ENCODE measurements at regions of chr5 and their contacts with region 1.

Region 1: DNA sequence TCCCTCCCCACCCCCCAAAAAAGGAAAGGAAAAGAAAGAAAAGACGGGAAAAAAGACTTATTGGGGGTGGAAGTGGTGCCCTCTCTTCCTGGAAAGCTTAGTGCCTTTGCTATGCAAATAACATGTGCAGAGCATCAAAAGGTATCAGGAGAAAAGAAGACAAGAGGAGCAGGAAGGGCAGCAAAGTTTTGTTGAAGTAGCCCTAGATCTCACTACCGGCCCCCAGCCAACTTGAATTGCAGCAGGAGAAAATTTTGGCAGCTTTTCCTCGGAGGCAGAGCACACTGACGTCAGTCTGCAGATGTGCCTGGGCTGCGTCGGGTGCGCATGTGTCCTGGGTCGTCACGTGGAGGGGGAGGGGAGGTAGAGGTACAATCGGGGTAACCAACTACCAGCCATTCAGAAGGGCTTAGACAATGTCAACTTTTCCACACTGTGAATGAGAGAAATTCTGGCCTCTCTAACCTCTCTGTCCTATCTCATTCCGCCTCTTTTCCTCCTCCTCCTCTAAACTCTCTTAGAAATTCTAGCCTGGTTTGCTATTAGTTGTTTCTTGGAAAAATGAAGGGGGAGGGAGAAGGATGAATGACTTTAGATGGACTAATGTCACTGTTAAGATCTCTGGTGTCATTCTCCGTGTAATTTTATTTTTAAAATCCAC is at the start of gene ADAMTS6:
- DNase-seq: peak; percentile 61
- ATAC-seq: peak; percentile 87
- H3K4me3 Mint-ChIP-seq: no peak within 1 kb of the TSS
- H3K27ac Mint-ChIP-seq: peak within 1 kb of the TSS; percentile 83
- H3K4me1 Mint-ChIP-seq: peaks cover 9% of the 10 kb centered on the region
- H3K27me3 Mint-ChIP-seq: no peaks in the 10 kb centered on the region
- CTCF ChIP-seq: no peak
- total RNA-seq, gene ADAMTS6: 3.2 and 4.1 TPM in 2 replicates

Region 2: DNA sequence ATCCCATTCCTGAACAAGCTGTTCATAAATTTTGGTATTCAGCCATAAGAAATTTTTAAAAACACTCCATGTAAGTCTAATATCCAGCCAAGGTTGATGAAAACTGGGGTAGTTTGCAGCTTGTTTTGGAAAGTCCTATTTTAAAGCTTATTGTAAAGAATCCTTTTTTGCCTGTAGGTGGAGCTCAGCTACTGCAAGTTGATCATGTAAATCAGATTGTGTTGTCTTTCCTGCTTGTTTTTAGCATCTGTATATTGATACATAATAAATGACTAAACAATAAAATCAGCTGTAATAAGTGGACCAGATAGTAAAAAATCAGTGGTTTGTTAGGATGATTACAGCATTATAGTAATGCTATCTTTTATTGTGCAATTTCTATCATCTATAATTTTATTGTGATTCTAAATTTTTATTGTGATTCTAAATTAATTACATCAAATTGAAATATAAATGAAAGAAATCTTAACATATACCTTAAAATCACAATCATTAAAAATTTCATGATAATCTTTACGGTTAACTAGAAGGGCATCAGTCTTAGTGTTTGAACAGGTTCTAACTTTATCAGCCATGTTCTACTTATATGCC is 670.6 kb before region 1 on chr5:
- CTCF ChIA-PET with region 1: interaction called, 90 read pairs
- POLR2A ChIA-PET with region 1: interaction called, 7 read pairs
- intact Hi-C with region 1: loop called (anchors 1 kb)
- DNase-seq: no peak
- ATAC-seq: no peak
- H3K4me3 Mint-ChIP-seq: no peak overlapping the region
- H3K27ac Mint-ChIP-seq: no peak overlapping the region
- H3K4me1 Mint-ChIP-seq: no peaks in the 10 kb centered on the region
- H3K27me3 Mint-ChIP-seq: no peaks in the 10 kb centered on the region
- CTCF ChIP-seq: no peak

Region 3: DNA sequence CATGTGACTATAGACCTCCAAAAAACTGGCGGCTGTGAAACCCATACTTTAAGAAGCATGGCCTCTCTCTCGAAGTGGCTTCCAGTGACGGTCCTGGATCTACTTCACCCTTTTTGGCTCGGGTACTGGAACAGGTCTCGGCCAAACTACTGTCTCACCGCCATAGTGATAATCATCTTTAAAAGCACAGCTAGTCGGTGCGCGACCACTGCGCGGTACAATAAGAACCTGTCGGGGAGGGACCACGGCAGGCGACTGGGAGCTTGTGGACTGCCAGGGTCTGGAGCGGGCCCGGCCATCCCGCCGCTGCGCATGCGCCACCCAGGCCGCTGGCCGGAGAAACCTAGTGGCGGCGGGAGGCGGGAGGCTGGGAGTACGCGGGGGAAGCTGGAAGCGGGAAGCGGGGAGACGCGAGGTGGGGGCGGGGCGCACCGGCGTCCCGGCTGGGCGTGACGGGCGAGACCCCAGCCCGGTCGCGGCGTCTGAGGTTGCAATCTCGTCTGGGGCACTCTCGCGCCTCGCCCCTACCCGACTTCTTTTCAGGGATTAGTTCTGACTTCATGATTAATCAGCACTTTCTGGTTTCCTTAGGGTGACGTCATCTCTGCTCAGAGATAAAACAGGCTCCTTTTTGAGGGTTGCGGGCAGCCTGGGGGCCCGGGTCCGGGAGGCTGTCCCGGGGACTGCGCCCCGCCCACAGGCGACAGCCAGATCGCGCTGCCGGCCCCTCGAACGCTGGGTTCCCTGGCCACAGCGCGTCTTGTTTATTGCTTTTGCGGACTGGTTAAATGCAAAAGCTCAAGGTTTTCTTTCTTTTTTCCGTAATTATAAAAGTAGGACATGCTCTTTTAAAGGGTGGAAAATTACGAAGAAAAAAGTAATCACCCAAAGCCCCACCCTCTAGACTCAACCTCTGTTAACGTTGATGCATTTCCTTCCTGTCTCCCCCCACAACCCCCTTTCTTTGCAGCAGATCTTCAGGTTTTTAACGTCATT is 446.3 kb before region 1 on chr5:
- CTCF ChIA-PET with region 1: interaction called, 13 read pairs
- POLR2A ChIA-PET with region 1: interaction called, 6 read pairs
- intact Hi-C with region 1: loop called (anchors 1 kb)
- DNase-seq: peak; percentile 70
- ATAC-seq: peak; percentile 80
- H3K4me3 Mint-ChIP-seq: peak overlapping the region; percentile 83
- H3K27ac Mint-ChIP-seq: peak overlapping the region; percentile 77
- H3K4me1 Mint-ChIP-seq: peaks cover 32% of the 10 kb centered on the region
- H3K27me3 Mint-ChIP-seq: no peaks in the 10 kb centered on the region
- CTCF ChIP-seq: no peak

Region 4: DNA sequence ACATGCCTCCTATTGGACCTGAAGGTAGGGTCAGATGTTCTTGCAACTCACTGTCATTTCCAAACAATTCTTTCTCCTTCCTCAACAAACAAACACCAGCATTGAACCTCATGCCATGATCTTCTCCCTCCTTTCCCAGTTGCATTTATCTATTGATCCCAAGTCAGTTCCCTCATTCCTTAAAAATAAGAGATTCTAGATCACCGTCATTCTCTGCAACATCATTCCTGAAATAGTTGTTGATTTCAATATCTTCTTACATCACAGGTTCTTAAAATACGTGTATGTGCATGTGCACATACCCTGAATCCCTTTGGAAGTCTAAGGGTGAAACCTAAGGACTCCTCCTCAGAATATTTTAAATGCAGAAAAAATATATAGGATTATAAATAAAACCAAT is 17.9 kb before region 1 on chr5:
- CTCF ChIA-PET with region 1: no interaction called
- POLR2A ChIA-PET with region 1: interaction called, 5 read pairs
- intact Hi-C with region 1: loop called (anchors 2 kb)
- DNase-seq: no peak
- ATAC-seq: no peak
- H3K4me3 Mint-ChIP-seq: no peak overlapping the region
- H3K27ac Mint-ChIP-seq: no peak overlapping the region
- H3K4me1 Mint-ChIP-seq: no peaks in the 10 kb centered on the region
- H3K27me3 Mint-ChIP-seq: no peaks in the 10 kb centered on the region
- CTCF ChIP-seq: no peak

Region 5: DNA sequence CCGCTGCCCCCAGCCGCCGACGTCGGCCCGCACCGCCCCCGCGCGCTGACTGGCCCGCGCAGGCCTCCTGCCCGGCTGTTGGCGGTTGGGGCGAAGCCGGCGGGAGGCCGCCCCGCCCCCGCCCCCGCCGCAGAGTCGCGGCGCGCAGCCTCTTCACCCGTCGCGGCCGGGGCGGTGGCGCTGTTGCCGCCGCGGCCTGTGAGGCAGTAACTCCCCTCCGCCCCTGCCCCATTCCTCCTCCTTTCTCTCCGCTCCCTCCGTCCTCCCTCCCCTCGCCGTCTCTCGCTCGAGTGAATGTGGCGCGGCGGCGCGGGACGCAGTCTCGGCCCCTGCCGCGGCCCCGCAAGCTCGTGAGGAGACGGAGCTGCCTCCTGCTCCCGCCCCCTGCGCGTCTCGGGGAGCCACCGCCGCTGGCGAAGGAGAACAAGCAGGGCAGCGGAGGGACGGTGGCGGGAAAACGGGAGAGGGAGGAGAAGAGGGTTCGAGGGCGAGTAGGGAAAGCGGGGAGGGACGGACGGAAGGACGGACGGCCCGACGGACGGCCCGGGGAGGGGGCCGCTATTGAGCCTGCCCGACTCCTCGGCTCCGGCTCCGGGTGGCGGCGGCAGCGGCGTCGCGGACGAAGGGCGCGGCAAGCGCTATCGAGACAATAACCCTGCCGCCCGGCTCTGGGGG is 444.0 kb after region 1 on chr5:
- CTCF ChIA-PET with region 1: no interaction called
- POLR2A ChIA-PET with region 1: no interaction called
- intact Hi-C with region 1: loop called (anchors 5 kb)
- DNase-seq: peak; percentile 82
- ATAC-seq: peak; percentile 73
- H3K4me3 Mint-ChIP-seq: peak overlapping the region; percentile 93
- H3K27ac Mint-ChIP-seq: peak overlapping the region; percentile 96
- H3K4me1 Mint-ChIP-seq: peaks cover 42% of the 10 kb centered on the region
- H3K27me3 Mint-ChIP-seq: no peaks in the 10 kb centered on the region
- CTCF ChIP-seq: no peak